IMR-90 (cell line): ENCODE measurements at regions of chr2 and their contacts with region 1.

Region 1: DNA sequence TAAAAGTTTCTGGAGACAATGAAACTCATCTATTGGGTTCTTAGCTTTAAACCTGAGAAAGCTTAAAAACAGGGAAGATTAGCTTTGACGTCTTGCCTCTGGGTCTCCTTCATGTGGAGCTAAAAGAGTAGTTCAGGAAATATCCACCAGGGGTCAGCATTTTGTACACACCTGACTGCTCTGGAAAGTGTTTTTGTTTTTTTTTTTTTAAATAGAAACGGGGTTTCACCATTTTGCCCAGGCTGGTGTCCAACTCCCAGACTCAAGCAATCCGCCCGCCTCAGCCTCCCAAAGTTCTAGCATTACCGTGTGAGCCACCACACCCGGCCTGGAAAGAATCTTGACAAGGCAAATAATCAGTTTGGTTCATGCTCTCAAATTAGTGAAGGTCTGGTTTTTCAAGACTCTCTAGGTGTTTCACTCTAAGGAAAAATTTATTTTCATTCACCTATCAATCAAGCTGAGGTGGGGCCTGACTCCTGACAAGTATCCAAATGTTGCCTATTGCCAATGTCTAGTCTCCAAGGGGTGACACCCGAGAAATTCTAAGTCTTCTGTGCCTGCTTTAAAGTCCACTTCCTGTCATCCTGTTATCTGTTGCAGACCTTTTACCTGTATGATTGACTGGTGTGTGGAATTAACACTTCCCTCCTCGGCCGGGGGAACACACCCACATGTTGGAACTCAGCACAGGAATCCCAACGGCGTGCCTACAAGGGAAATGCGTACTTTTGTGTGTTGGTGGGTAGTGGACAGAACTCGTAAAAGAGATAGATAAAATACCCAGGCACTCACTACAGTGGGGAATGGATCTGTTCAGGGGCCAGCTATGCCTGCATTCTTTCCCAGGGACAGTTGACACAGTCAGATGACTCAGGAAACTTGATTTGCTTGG is 11.3 kb downstream of the IL1RN start:
- DNase-seq: peak; percentile 66
- ATAC-seq: peak; percentile 75
- H3K4me3 ChIP-seq: no peak overlapping the region
- H3K27ac ChIP-seq: no peak overlapping the region
- H3K4me1 ChIP-seq: no peaks in the 10 kb centered on the region
- H3K27me3 ChIP-seq: peaks cover 14% of the 10 kb centered on the region
- CTCF ChIP-seq: peak; percentile 77
- POLR2A ChIP-seq: no peak
- RAD21 ChIP-seq: peak; percentile 59

Region 2: DNA sequence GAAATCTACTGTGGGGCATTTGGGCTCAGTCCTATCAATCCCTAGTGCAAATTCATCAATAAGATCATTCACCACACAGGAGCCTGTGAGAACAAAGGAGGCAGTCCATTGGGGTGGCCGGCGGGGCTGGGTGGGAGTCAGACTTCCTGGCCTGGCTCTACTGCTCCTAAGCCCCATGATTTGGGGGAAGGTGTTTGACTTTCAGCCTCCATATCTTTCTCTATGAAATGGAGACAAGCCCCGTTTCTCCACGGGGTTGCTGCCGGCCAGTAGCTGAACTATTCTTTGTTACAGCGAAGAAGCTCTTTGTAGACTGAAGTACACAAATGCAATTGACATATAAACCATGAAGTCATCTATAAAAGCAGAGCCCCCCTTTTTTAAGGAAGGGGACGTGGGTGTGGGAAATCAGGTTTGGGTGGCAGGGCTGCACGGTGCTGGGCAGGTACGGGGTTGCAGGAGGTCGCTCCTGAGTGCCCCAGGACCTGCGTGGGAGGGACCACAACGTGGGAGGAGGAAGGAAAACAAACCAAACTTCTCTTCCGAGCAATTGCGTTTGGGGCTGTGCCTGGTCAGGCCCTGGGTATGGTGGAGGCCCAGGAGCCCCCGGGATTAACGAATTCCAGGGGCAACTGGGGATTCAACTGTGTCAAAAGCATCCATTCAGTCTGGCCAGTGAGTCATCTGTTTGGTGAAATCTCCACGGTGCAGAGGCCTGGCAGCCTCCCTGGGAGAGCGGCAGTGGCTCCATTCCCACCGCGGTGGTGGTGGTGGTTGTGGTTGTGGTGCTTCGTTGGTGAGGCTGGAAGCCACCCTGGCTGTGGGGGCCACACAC is 982.3 kb before region 1 on chr2:
- CTCF ChIA-PET with region 1: no interaction called
- POLR2A ChIA-PET with region 1: no interaction called
- dilution Hi-C with region 1: no loop called
- in situ Hi-C with region 1: no loop called
- intact Hi-C with region 1: no loop called
- DNase-seq: peak; percentile 47
- ATAC-seq: peak; percentile 65
- H3K4me3 ChIP-seq: no peak overlapping the region
- H3K27ac ChIP-seq: no peak overlapping the region
- H3K4me1 ChIP-seq: peaks cover 5% of the 10 kb centered on the region
- H3K27me3 ChIP-seq: no peaks in the 10 kb centered on the region
- CTCF ChIP-seq: no peak
- POLR2A ChIP-seq: no peak
- RAD21 ChIP-seq: no peak

Region 3: DNA sequence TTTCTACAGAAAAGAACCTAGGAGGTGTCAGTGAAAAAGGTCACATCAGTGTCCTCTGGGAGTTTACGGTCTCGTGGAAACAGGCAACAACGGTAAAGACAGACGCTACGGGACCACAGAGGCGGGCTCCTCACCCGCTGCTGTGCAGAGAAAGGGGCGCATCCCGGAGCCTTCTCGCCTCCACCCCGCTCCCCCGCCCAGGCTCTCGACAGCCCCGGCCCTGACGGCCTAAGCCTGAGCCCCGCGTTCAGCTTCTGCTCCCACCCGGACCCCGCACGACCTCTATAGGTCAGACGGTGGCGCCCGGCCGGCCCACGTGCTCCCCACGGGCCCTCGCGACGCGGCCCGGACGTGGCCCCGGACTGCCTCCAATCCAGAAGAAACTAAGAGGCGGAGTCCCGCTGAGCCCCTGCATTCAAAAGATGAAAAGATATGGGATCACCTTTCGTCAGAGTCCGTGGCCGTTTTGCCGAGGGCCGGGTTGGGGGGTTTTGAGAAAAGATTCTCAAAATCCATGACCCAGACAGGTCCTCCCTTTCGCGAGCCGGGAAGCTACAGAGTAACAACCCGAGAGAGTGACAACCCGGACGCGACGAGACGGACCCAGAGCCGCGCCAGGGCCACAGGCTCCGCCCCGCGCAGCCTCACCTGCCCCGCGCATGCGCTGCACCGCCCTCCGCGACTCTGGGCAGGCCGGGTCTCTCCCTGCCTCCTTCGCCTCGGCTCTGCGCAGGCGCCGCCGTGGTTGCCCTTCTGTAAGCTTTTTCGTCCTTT is 884.0 kb before region 1 on chr2 and contains the start of gene ZC3H8:
- CTCF ChIA-PET with region 1: no interaction called
- POLR2A ChIA-PET with region 1: no interaction called
- dilution Hi-C with region 1: no loop called
- in situ Hi-C with region 1: no loop called
- intact Hi-C with region 1: no loop called
- DNase-seq: peak; percentile 75
- ATAC-seq: peak; percentile 99
- H3K4me3 ChIP-seq: peak within 1 kb of the TSS; percentile 57
- H3K27ac ChIP-seq: peak within 1 kb of the TSS; percentile 15; the same call in 1 of the 2 replicates
- H3K4me1 ChIP-seq: no peaks in the 10 kb centered on the region
- H3K27me3 ChIP-seq: no peaks in the 10 kb centered on the region
- CTCF ChIP-seq: no peak
- POLR2A ChIP-seq: no peak; the same call in 1 of the 2 replicates
- RAD21 ChIP-seq: no peak
- total RNA-seq, gene ZC3H8: 0.18 and 1.7 TPM in 2 replicates

Region 4: DNA sequence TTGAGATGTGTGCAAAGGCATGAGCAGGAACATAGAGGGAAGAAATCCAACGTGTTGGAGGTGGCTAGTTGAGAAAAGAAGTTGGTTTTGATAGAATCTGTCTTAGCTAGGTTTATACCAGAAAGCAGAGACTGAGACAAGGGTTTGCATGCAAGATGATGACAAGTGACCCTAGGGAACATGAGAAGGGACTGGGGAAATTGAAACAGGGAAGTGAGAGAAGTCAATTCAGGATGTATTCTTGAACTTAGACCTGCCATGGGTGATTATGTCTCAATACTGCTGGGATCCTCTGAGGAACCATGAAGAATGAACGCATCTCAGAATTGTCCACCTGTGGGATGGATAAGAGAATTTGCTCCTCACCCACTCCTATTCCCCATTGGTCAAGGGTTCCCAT is 112.9 kb before region 1 on chr2:
- CTCF ChIA-PET with region 1: no interaction called
- POLR2A ChIA-PET with region 1: no interaction called
- dilution Hi-C with region 1: no loop called
- in situ Hi-C with region 1: no loop called
- intact Hi-C with region 1: no loop called
- DNase-seq: no peak
- ATAC-seq: no peak
- H3K4me3 ChIP-seq: no peak overlapping the region
- H3K27ac ChIP-seq: no peak overlapping the region
- H3K4me1 ChIP-seq: no peaks in the 10 kb centered on the region
- H3K27me3 ChIP-seq: peaks cover 2% of the 10 kb centered on the region; the same call in 1 of the 2 replicates
- CTCF ChIP-seq: no peak
- POLR2A ChIP-seq: no peak
- RAD21 ChIP-seq: no peak

Region 5: DNA sequence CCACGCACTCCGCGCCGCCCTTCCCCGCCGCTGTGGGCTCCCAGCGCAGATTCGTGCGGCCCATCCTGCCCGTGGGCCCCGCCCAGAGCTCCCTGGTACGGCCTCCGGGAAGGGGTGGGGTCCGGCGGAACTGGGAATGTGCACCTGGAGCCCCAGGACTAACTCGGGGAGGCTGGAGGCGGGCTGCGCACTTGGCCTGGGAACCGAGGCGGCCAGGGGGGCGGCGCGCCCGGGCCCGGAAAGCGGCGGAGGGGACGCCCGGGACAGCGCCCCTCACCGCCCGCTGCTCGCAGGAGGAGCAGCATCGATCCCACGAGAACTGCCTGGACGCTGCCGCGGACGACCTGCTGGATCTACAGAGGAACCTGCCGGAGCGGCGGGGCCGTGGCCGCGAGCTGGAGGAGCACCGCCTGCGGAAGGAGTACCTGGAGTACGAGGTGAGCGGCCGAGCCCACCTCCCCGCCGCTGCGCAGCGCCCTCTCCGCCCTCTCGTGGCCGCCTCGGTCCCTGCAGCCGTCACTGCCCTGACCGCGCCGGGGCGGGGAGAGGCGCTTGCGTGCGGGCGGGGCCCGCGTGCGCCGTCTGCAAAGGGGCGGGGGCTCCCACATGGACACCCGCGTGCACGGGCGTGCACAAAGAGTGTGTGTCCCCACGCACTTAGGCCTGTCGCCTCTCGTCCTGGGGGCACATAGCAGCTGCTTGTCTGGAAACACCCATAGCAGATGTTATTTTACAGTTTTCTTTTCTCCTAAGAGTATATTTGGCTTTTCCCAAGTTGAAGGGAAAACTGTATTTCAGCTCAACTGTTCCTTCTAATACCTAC is 60.3 kb after region 1 on chr2:
- CTCF ChIA-PET with region 1: interaction called, 24 read pairs
- POLR2A ChIA-PET with region 1: no interaction called
- dilution Hi-C with region 1: no loop called
- in situ Hi-C with region 1: no loop called
- intact Hi-C with region 1: loop called (anchors 1 kb)
- DNase-seq: peak; percentile 47
- ATAC-seq: peak; percentile 95
- H3K4me3 ChIP-seq: peak overlapping the region; percentile 78
- H3K27ac ChIP-seq: no peak overlapping the region; the same call in 1 of the 2 replicates
- H3K4me1 ChIP-seq: no peaks in the 10 kb centered on the region
- H3K27me3 ChIP-seq: peaks cover 19% of the 10 kb centered on the region; the same call in 1 of the 2 replicates
- CTCF ChIP-seq: peak; percentile 83
- POLR2A ChIP-seq: no peak
- RAD21 ChIP-seq: peak; percentile 44

Region 6: GRCh38 chr2:113225263-113226259 is 86.9 kb after region 1 on chr2:
- CTCF ChIA-PET with region 1: no interaction called
- POLR2A ChIA-PET with region 1: no interaction called
- dilution Hi-C with region 1: no loop called
- in situ Hi-C with region 1: no loop called
- intact Hi-C with region 1: no loop called
- DNase-seq: peak; percentile 49
- ATAC-seq: no peak
- H3K4me3 ChIP-seq: no peak overlapping the region
- H3K27ac ChIP-seq: no peak overlapping the region
- H3K4me1 ChIP-seq: no peaks in the 10 kb centered on the region
- H3K27me3 ChIP-seq: peaks cover 9% of the 10 kb centered on the region
- CTCF ChIP-seq: no peak
- POLR2A ChIP-seq: no peak
- RAD21 ChIP-seq: no peak

Region 7: GRCh38 chr2:113370478-113371091 is 231.9 kb after region 1 on chr2:
- CTCF ChIA-PET with region 1: no interaction called
- POLR2A ChIA-PET with region 1: no interaction called
- dilution Hi-C with region 1: no loop called
- in situ Hi-C with region 1: loop called (anchors 5 kb)
- intact Hi-C with region 1: loop called (anchors 1 kb)
- DNase-seq: peak; percentile 72
- ATAC-seq: peak; percentile 98
- H3K4me3 ChIP-seq: no peak overlapping the region
- H3K27ac ChIP-seq: no peak overlapping the region
- H3K4me1 ChIP-seq: no peaks in the 10 kb centered on the region
- H3K27me3 ChIP-seq: peaks cover 15% of the 10 kb centered on the region
- CTCF ChIP-seq: peak; percentile 82
- POLR2A ChIP-seq: no peak
- RAD21 ChIP-seq: peak; percentile 91

Region 8: DNA sequence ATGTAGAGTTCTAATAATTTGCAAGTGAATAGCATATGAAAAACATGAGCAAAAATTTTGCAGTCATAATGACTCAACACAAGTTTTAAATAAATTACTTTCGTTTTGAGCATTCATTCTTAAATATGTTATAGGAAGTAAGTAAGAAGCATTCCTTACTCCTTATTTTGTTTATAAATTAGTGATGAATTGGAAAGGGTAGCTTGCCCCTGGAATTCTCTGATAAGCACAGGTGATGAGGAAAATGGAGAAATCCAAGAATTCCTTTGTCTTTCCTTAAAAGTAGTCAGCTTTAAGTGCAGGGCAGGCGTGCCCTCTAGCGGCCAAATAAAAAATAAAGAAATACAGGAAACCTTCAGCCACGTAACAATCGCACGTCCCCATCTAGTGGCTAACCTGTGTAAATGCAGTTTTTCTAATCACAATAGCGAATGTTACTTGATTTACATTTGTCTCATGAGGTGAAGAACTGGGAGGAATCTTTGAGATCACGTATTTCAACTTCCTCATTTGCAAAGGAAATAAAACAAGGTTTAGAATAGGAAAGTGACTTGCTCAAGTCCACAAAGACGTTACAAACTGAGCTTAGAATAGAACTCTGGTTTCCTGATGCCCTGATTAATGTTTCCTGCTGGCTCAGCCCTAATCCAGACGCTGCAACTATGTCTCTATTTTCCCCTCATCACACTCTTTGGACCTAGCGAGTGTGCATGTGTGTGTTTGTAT is 251.6 kb after region 1 on chr2:
- CTCF ChIA-PET with region 1: interaction called, 11 read pairs
- POLR2A ChIA-PET with region 1: no interaction called
- dilution Hi-C with region 1: no loop called
- in situ Hi-C with region 1: no loop called
- intact Hi-C with region 1: loop called (anchors 1 kb)
- DNase-seq: peak; percentile 79
- ATAC-seq: peak; percentile 99
- H3K4me3 ChIP-seq: peak overlapping the region; percentile 16; the same call in 1 of the 2 replicates
- H3K27ac ChIP-seq: no peak overlapping the region
- H3K4me1 ChIP-seq: no peaks in the 10 kb centered on the region
- H3K27me3 ChIP-seq: peaks cover 8% of the 10 kb centered on the region
- CTCF ChIP-seq: peak; percentile 99
- POLR2A ChIP-seq: no peak
- RAD21 ChIP-seq: peak; percentile 80